Heart left ventricle (tissue), 16 donors: ENCODE measurements at regions of chr12 and their contacts with region 1.

Region 1: GRCh38 chr12:95217377-95218149 is at the starts of genes FGD6 and VEZT:
- DNase-seq: peak; percentile 98 to 99 (median 99)
- ATAC-seq: peak; percentile 95 to 97 (median 96)
- H3K4me3 ChIP-seq: peak within 1 kb of the TSS; percentile 71 to 94 (median 82)
- H3K27ac ChIP-seq: peak within 1 kb of the TSS; percentile 92 to 99 (median 96)
- H3K4me1 ChIP-seq: peaks cover 0 to 60% (median 30%) of the 10 kb centered on the region in 12 donors
- H3K27me3 ChIP-seq: no peaks in the 10 kb centered on the region
- CTCF ChIP-seq: peak; percentile 35 to 89 (median 62)
- POLR2A ChIP-seq: peak; percentile 15 to 85
- total RNA-seq, gene FGD6: 11.9 to 29.1 (median 19.5) TPM
- total RNA-seq, gene VEZT: 53.6 to 89.9 (median 66.2) TPM

Region 2: GRCh38 chr12:94867066-94867855 is 350.3 kb before region 1 on chr12:
- intact Hi-C with region 1: no loop called
- DNase-seq: peak in 1 of 5 donors; percentile 22
- ATAC-seq: no peak
- H3K4me3 ChIP-seq: no peak overlapping the region
- H3K27ac ChIP-seq: no peak overlapping the region
- H3K4me1 ChIP-seq: no peaks in the 10 kb centered on the region
- H3K27me3 ChIP-seq: peaks cover 2 to 42% (median 19%) of the 10 kb centered on the region in 9 donors
- CTCF ChIP-seq: no peak
- POLR2A ChIP-seq: no peak

Region 3: DNA sequence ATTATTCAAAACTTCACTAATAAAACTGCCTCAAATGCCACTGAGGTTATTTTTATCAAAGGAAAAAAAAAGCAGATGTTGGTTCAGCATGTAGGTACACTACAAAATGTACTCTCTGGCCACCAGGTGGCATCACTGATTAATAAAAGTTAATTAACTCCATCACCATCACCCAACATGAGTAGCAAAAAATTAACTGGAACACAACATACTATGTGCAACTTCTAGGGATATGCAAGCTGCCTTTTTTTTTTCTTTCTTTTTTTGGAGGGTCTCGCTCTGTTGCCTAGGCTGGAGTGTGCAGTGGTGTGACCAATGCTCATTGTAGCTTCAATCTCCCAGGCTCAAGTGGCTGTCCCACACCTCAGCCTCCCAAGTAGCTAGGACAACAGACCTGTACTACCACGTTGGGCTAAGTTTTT is 100.4 kb before region 1 on chr12:
- intact Hi-C with region 1: loop called (anchors 1 to 10 kb)
- DNase-seq: peak in 4 of 5 donors; percentile 50 to 72 (median 67)
- ATAC-seq: peak; percentile 70 to 88 (median 85)
- H3K4me3 ChIP-seq: no peak overlapping the region
- H3K27ac ChIP-seq: peak overlapping the region in 2 of 12 donors; percentile 35 to 40
- H3K4me1 ChIP-seq: peaks cover 0 to 24% (median 9%) of the 10 kb centered on the region in 12 donors
- H3K27me3 ChIP-seq: no peaks in the 10 kb centered on the region
- CTCF ChIP-seq: peak; percentile 62 to 82 (median 77)
- POLR2A ChIP-seq: no peak

Region 4: DNA sequence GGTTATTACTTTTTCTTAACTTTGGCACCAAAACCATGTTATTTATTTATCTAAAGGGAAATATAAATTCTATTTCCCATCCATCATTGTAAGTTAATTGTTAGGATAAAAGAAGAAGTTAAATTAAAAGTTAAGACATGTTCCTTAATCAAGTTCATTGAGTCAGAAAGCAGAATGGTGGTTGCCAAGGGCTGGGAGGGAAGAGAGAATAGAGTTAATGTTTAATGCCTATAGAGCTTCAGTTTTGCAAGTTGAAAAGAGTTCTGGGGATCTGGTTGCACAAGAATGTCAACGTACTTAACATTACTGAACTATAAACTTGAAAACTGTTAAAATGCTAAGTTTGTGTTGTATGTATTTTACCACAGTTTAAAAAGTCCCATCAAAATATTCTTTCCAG is 81.0 kb before region 1 on chr12:
- intact Hi-C with region 1: loop called in 2 of 10 experiments (anchors 5 to 10 kb)
- DNase-seq: no peak
- ATAC-seq: no peak
- H3K4me3 ChIP-seq: no peak overlapping the region
- H3K27ac ChIP-seq: no peak overlapping the region
- H3K4me1 ChIP-seq: peaks cover 0 to 19% (median 0%) of the 10 kb centered on the region in 12 donors
- H3K27me3 ChIP-seq: no peaks in the 10 kb centered on the region
- CTCF ChIP-seq: no peak
- POLR2A ChIP-seq: no peak

Region 5: GRCh38 chr12:95143621-95144205 is 73.8 kb before region 1 on chr12:
- intact Hi-C with region 1: loop called in 4 of 10 experiments (anchors 5 to 10 kb)
- DNase-seq: peak in 1 of 5 donors; percentile 42
- ATAC-seq: peak; percentile 78 to 92 (median 88)
- H3K4me3 ChIP-seq: no peak overlapping the region
- H3K27ac ChIP-seq: peak overlapping the region in 11 of 12 donors; percentile 1 to 73 (median 66)
- H3K4me1 ChIP-seq: peaks cover 0 to 24% (median 17%) of the 10 kb centered on the region in 12 donors
- H3K27me3 ChIP-seq: no peaks in the 10 kb centered on the region
- CTCF ChIP-seq: peak in 1 of 12 donors; percentile 14
- POLR2A ChIP-seq: no peak

Region 6: GRCh38 chr12:95164656-95165055 is 52.9 kb before region 1 on chr12:
- intact Hi-C with region 1: loop called in 1 of 10 experiments (anchors 5 kb)
- DNase-seq: no peak
- ATAC-seq: no peak
- H3K4me3 ChIP-seq: no peak overlapping the region
- H3K27ac ChIP-seq: peak overlapping the region in 1 of 12 donors; percentile 65
- H3K4me1 ChIP-seq: peaks cover 0 to 17% (median 5%) of the 10 kb centered on the region in 12 donors
- H3K27me3 ChIP-seq: no peaks in the 10 kb centered on the region
- CTCF ChIP-seq: no peak
- POLR2A ChIP-seq: no peak

Region 7: GRCh38 chr12:95473884-95474659 is 256.5 kb after region 1 on chr12 and contains the start of gene METAP2:
- intact Hi-C with region 1: loop called in 2 of 10 experiments (anchors 5 to 10 kb)
- DNase-seq: peak; percentile 96 to 98 (median 98)
- ATAC-seq: peak; percentile 100
- H3K4me3 ChIP-seq: peak within 1 kb of the TSS; percentile 48 to 98 (median 92)
- H3K27ac ChIP-seq: peak within 1 kb of the TSS; percentile 85 to 98 (median 94)
- H3K4me1 ChIP-seq: peaks cover 0 to 35% (median 19%) of the 10 kb centered on the region in 12 donors
- H3K27me3 ChIP-seq: no peaks in the 10 kb centered on the region
- CTCF ChIP-seq: no peak
- POLR2A ChIP-seq: peak in 1 of 2 donors; percentile 67
- total RNA-seq, gene METAP2: 50.9 to 69.8 (median 55.5) TPM